ENCODE measurements at regions of chr9 and their contacts with region 1.

Region 1: DNA sequence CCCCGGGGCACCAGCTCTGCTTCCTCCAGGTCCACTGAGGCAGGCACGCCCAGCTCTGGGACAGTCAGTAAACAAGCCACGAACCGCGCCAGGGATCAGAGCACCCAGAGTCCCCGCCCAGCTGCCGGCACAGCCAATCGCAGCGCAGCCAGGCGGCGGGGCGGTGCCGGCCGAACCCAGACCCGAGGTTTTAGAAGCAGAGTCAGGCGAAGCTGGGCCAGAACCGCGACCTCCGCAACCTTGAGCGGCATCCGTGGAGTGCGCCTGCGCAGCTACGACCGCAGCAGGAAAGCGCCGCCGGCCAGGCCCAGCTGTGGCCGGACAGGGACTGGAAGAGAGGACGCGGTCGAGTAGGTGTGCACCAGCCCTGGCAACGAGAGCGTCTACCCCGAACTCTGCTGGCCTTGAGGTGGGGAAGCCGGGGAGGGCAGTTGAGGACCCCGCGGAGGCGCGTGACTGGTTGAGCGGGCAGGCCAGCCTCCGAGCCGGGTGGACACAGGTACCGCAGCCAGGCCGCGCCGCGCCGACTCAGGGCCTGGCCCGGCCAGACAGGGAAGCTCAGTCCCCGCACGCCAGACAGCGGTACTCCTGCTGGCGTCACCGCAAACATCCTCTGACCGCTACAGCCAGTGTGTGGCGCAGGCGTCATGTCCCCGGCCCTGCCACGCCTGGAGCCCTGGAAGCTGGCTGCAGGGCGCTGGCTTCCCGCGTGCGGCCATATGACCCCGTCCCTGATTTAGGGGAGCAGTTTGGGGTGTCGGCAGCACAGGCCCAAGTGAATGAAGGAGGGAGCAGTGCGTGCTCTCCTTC is at the start of gene CTSL:
- DNase-seq: peak; percentile 93 to 97 (median 96)
- H3K4me3 ChIP-seq: peak within 1 kb of the TSS; percentile 61 to 95 (median 86)
- H3K27ac ChIP-seq: peak within 1 kb of the TSS; percentile 82 to 99 (median 97)
- H3K27me3 ChIP-seq: no peaks in the 10 kb centered on the region
- CTCF ChIP-seq: peak in 44 of 56 donors; percentile 3 to 64 (median 33)
- total RNA-seq, gene CTSL: 39.8 to 104 (median 62.7) TPM

Region 2: DNA sequence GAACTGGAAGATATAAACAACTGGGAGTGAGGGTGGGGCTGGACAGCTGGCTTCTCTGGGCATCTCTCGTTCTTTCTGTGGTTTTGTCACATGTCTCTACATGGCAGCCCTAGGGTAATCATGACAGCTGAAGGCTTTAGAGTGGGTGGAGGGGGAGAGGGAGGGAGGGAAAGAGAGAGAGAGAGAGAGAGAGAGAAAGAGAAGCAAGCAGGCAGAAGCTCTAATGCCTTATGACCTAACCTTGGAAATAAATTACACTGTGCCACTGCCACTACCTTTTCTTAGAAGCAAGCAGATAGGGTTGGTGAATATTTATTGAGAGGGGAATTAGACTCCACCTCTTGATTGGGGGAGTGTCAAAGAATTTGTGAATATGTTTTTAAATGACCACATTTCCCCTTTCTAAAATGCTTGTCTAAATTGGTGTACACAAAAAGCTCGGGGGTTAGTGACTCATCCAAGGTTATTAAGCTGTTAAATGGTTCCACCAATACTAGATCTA is 231.1 kb before region 1 on chr9:
- intact Hi-C with region 1: no loop called
- DNase-seq: no peak
- H3K4me3 ChIP-seq: no peak overlapping the region
- H3K27ac ChIP-seq: no peak overlapping the region
- H3K27me3 ChIP-seq: peaks cover 0 to 29% (median 2%) of the 10 kb centered on the region in 45 donors
- CTCF ChIP-seq: no peak

Region 3: DNA sequence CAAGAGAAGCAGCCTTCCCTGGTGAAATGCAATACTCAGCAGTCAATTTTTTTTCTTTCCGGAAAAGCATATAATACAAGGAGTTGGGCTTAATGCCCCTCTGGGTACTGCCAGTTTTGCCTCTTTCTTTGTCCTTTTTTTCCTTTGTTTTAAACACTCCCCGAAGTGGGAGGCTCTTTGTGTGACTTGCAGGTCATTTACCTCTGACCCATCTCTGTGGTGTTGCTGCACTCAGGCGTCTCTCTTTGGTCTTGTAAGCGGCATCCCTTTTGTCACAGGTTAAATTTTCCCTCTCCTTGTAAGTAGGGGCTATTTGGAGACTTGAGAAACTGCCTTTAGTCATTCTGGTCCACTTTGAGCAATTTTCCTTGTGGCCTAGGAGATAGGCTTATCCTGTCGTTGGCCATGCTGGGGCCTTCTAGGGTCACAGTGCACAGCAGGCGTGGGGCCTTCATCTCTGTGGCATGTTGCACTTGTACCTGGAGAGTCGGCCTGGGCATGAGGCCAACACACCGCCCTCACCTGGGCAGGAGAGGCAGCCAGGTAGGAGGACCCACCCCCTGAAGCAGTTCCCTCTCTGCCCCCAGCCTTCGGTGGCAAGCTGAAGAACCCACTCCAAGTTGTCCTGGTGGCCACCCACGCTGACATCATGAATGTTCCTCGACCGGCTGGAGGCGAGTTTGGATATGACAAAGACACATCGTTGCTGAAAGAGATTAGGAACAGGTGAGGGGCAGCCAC is 27.9 kb before region 1 on chr9:
- intact Hi-C with region 1: no loop called
- DNase-seq: no peak
- H3K4me3 ChIP-seq: no peak overlapping the region
- H3K27ac ChIP-seq: no peak overlapping the region
- H3K27me3 ChIP-seq: no peaks in the 10 kb centered on the region
- CTCF ChIP-seq: no peak

Region 4: GRCh38 chr9:87812375-87813118 is 86.4 kb after region 1 on chr9:
- intact Hi-C with region 1: loop called in 1 of 2 experiments (anchors 5 kb)
- DNase-seq: peak in 1 of 10 donors; percentile 33
- H3K4me3 ChIP-seq: peak overlapping the region in 12 of 59 donors; percentile 2 to 44 (median 22)
- H3K27ac ChIP-seq: no peak overlapping the region
- H3K27me3 ChIP-seq: peaks cover 0 to 11% (median 0%) of the 10 kb centered on the region in 45 donors
- CTCF ChIP-seq: peak; percentile 29 to 96 (median 83)

Region 5: DNA sequence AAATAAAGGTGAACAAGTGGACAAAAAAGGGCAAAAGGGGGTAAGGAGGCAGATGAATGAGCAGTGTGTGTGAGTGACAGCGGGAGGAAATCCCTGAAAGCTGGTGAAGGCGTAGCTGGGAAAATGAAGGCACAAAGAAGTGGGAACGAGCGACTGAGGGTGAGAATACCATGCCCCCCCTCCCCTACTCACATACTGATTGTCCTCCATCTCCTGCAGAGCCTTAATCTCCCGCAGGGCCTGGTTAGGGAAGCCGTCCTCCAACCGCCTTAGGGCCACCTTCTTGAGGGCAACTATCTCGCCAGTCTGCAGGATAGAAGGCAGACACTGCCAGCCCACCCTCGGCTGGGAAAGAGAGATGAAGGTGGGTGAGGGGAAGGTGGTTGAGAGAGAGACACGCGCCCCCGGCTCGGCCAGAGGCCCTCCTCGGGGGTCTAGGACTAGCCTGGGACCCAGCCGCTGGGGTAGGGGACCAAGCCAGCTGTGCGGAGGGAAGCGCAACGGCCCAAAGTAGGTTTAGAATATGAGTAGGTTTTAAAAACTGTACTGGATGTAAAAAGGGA is 247.7 kb after region 1 on chr9:
- intact Hi-C with region 1: loop called (anchors 5 to 10 kb)
- DNase-seq: peak in 1 of 10 donors; percentile 47
- H3K4me3 ChIP-seq: peak overlapping the region; percentile 53 to 93 (median 76)
- H3K27ac ChIP-seq: peak overlapping the region in 56 of 59 donors; percentile 16 to 94 (median 86)
- H3K27me3 ChIP-seq: no peaks in the 10 kb centered on the region
- CTCF ChIP-seq: no peak